ENCODE measurements at regions of chr3 and their contacts with region 1.

Region 1: GRCh38 chr3:183515968-183516851 is 39.3 kb downstream of the KLHL6 start:
- DNase-seq: no peak
- ATAC-seq: no peak
- H3K4me3 ChIP-seq: no peak overlapping the region
- H3K27ac ChIP-seq: no peak overlapping the region
- H3K4me1 ChIP-seq: no peaks in the 10 kb centered on the region
- H3K27me3 ChIP-seq: peaks cover 10% of the 10 kb centered on the region; the same call in 1 of the 2 replicates
- CTCF ChIP-seq: no peak

Region 2: GRCh38 chr3:183473969-183474368 is 42.2 kb before region 1 on chr3:
- CTCF ChIA-PET with region 1: no interaction called
- POLR2A ChIA-PET with region 1: interaction called, 10 read pairs
- in situ Hi-C with region 1: no loop called
- intact Hi-C with region 1: no loop called
- DNase-seq: no peak
- ATAC-seq: no peak
- H3K4me3 ChIP-seq: no peak overlapping the region
- H3K27ac ChIP-seq: no peak overlapping the region
- H3K4me1 ChIP-seq: peaks cover 4% of the 10 kb centered on the region; the same call in 1 of the 2 replicates
- H3K27me3 ChIP-seq: peaks cover 6% of the 10 kb centered on the region; the same call in 1 of the 2 replicates
- CTCF ChIP-seq: no peak

Measured in Panc1 (cell line).